Heart right ventricle (tissue), 16 donors: ENCODE measurements at regions of chr15 and their contacts with region 1.

Region 1: GRCh38 chr15:41051139-41051538 is 64.9 kb downstream of the INO80 start:
- DNase-seq: no peak
- ATAC-seq: no peak
- H3K4me3 ChIP-seq: no peak overlapping the region
- H3K27ac ChIP-seq: no peak overlapping the region
- H3K4me1 ChIP-seq: no peaks in the 10 kb centered on the region
- H3K27me3 ChIP-seq: no peaks in the 10 kb centered on the region
- CTCF ChIP-seq: no peak

Region 2: DNA sequence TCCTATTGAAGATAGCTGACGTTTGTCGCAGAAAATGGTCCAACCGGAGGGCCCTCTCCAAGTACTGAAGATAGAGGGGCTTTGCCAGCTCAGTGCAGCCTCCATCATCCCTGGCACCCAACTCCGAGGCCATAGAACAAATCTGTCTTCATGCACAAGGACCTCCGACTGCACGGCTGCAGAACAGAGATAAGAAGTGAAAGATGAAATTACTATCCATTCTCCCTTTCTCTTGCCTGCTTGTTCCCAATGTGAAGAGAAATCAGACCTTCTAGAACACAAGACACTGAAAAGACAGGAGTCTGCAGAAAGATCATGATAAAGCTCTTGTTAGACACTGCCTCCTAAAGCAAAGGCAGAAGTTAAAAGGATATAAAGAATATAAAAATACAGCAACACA is 45.0 kb after region 1 on chr15:
- intact Hi-C with region 1: loop called in 1 of 10 experiments (anchors 5 kb)
- DNase-seq: no peak
- ATAC-seq: no peak
- H3K4me3 ChIP-seq: no peak overlapping the region
- H3K27ac ChIP-seq: no peak overlapping the region
- H3K4me1 ChIP-seq: no peaks in the 10 kb centered on the region
- H3K27me3 ChIP-seq: no peaks in the 10 kb centered on the region
- CTCF ChIP-seq: no peak